Activated CD4-positive, alpha-beta memory T cell treated with anti-CD3 and anti-CD28 coated beads for 36 hours (primary cell): ENCODE measurements at regions of chr22 and their contacts with region 1.

Region 1: GRCh38 chr22:22959147-22959827 is 71.7 kb downstream of the IGLL5 start:
- DNase-seq: peak; percentile 81
- H3K4me3 Mint-ChIP-seq: no peak overlapping the region
- H3K27ac Mint-ChIP-seq: no peak overlapping the region
- H3K4me1 Mint-ChIP-seq: peaks cover 3% of the 10 kb centered on the region
- H3K27me3 Mint-ChIP-seq: peaks cover 21% of the 10 kb centered on the region

Region 2: GRCh38 chr22:22737590-22737989 is 221.7 kb before region 1 on chr22:
- CTCF ChIA-PET with region 1: no interaction called
- POLR2A ChIA-PET with region 1: no interaction called
- intact Hi-C with region 1: no loop called
- DNase-seq: no peak
- H3K4me3 Mint-ChIP-seq: no peak overlapping the region
- H3K27ac Mint-ChIP-seq: no peak overlapping the region
- H3K4me1 Mint-ChIP-seq: peaks cover 4% of the 10 kb centered on the region
- H3K27me3 Mint-ChIP-seq: peaks cover 24% of the 10 kb centered on the region

Region 3: GRCh38 chr22:22770280-22770871 is 188.9 kb before region 1 on chr22:
- CTCF ChIA-PET with region 1: interaction called, 10 read pairs
- POLR2A ChIA-PET with region 1: no interaction called
- intact Hi-C with region 1: no loop called
- DNase-seq: peak; percentile 65
- H3K4me3 Mint-ChIP-seq: no peak overlapping the region
- H3K27ac Mint-ChIP-seq: no peak overlapping the region
- H3K4me1 Mint-ChIP-seq: peaks cover 9% of the 10 kb centered on the region
- H3K27me3 Mint-ChIP-seq: peaks cover 5% of the 10 kb centered on the region

Region 4: GRCh38 chr22:22848364-22848866 is 110.9 kb before region 1 on chr22:
- CTCF ChIA-PET with region 1: interaction called, 100 read pairs
- POLR2A ChIA-PET with region 1: no interaction called
- intact Hi-C with region 1: loop called (anchors 1 kb)
- DNase-seq: peak; percentile 78
- H3K4me3 Mint-ChIP-seq: no peak overlapping the region
- H3K27ac Mint-ChIP-seq: no peak overlapping the region
- H3K4me1 Mint-ChIP-seq: peaks cover 28% of the 10 kb centered on the region
- H3K27me3 Mint-ChIP-seq: no peaks in the 10 kb centered on the region

Region 5: GRCh38 chr22:22903355-22903777 is 55.9 kb before region 1 on chr22:
- CTCF ChIA-PET with region 1: no interaction called
- POLR2A ChIA-PET with region 1: no interaction called
- intact Hi-C with region 1: no loop called
- DNase-seq: no peak
- H3K4me3 Mint-ChIP-seq: no peak overlapping the region
- H3K27ac Mint-ChIP-seq: no peak overlapping the region
- H3K4me1 Mint-ChIP-seq: no peaks in the 10 kb centered on the region
- H3K27me3 Mint-ChIP-seq: peaks cover 1% of the 10 kb centered on the region

Region 6: DNA sequence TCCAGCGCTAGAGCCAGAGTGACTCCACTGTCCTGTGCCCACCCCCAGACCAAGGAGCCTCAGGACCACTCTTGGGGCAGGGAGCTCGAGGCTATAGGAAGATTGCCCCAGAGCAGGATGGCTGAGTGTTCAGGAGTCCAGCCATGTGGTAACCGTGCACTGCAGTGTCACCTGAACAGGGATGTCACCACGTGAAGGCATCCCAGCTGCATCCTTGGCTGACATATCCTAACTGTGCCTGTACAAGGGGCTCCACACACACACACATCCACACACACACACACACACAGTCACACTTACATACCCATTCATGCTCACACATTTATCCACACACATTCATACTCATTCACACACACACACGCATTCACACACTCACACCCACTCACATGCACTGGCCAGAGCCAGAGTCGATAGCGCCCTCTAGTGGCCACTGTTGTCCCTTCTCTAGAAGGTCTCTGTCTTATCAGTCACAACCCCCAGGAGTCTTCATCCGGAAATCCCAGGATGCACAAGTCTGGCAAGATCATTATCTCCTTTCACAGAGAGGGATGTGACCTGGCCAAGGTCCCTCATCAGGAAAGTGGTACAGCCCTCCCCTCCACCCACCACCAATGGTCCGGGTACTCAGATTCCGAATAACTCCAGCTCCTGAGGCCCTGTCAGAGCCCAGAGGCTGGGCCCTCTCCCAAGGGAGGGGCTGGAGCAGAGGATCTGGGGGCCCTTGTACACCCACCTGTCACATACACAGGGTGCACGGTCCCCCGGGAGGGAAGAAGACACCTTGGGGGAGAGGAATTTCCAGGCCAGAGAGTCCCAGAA is 16.6 kb before region 1 on chr22:
- CTCF ChIA-PET with region 1: interaction called, 44 read pairs
- POLR2A ChIA-PET with region 1: no interaction called
- intact Hi-C with region 1: no loop called
- DNase-seq: peak; percentile 83
- H3K4me3 Mint-ChIP-seq: no peak overlapping the region
- H3K27ac Mint-ChIP-seq: no peak overlapping the region
- H3K4me1 Mint-ChIP-seq: peaks cover 5% of the 10 kb centered on the region
- H3K27me3 Mint-ChIP-seq: peaks cover 4% of the 10 kb centered on the region

Region 7: GRCh38 chr22:22982616-22983015 is 23.3 kb after region 1 on chr22:
- CTCF ChIA-PET with region 1: no interaction called
- POLR2A ChIA-PET with region 1: no interaction called
- intact Hi-C with region 1: no loop called
- DNase-seq: no peak
- H3K4me3 Mint-ChIP-seq: no peak overlapping the region
- H3K27ac Mint-ChIP-seq: no peak overlapping the region
- H3K4me1 Mint-ChIP-seq: peaks cover 4% of the 10 kb centered on the region
- H3K27me3 Mint-ChIP-seq: peaks cover 17% of the 10 kb centered on the region

Region 8: DNA sequence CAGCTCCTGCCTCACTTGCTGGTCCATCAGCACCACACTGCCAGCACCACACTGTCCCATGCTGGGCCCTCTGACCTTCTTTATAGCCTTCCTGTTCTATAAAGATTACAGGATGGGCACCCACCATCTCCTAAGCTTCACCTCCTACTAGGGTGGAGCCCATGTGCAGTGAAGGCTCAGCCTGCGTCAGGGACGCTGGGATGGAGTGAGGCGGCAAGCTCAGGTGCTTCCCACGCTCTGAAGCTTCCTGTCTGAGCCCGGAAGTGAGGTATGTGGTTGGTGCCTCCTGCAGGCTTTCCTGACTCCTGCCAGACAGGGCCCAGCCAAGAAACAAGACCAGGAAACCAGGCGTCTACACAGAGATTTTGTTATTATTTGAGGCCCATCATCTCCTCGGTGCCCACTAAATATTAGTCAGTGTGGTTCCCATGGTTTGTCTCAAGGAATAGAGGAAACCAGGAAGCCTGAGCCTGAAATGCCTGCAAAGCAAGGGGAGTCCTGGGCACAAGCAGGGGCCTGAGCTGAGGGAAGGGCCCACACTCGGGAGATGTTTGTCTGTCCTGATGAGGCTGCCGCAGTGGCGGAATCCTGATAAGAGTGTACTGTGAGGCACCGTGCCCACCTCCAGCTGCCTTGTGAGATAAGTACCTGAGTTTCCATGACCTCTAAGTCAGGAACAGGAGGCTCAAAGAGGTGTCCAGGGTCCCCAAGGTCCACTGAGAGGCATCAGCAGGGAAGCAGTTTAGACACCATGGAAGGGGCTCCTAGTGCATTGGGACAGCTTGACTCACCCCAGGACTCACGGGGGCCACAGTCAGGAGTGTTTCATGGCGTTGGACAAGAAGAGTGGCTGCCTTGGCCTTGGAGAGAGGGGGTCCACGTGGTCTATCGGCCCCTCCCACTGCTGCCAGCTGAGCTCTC is 160.5 kb after region 1 on chr22:
- CTCF ChIA-PET with region 1: interaction called, 105 read pairs
- POLR2A ChIA-PET with region 1: no interaction called
- intact Hi-C with region 1: loop called (anchors 2 kb)
- DNase-seq: peak; percentile 78
- H3K4me3 Mint-ChIP-seq: peak overlapping the region; percentile 52
- H3K27ac Mint-ChIP-seq: peak overlapping the region; percentile 82
- H3K4me1 Mint-ChIP-seq: peaks cover 17% of the 10 kb centered on the region
- H3K27me3 Mint-ChIP-seq: no peaks in the 10 kb centered on the region

Region 9: DNA sequence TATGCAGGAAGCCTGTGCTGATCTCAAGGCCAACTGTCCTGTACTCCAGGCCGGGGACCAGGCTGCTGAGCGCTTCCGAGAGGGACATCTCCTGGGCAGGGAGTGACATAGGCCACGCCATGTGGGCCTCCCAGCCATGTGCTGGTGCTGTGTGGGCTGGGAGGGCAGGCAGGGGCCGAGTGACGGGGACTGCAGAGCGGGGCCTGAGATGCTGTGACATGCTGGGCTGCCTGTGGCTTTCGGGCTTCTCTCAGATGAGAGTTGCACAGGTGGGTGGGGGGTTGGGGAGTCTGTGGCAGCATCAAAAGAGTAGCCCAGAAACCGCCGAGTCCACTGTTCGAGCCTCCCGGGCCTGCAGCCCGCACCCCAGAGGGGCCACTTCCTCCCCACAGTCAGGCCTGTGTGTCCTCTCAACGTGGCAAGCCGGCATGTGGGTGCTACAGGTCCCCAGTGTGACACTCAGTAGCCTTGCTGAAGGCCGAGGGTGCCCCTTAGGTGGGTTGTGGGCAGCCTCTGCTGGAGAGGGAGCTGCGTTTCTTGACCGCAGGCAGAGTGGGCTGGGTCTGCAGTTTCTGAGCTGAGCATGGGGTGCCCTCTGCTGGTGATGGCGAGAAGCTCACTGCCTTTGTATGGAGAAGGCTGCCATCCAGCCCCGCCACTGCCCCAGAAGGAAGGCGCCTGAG is 322.3 kb after region 1 on chr22:
- CTCF ChIA-PET with region 1: interaction called, 9 read pairs
- POLR2A ChIA-PET with region 1: no interaction called
- intact Hi-C with region 1: loop called (anchors 5 kb)
- DNase-seq: peak; percentile 87
- H3K4me3 Mint-ChIP-seq: no peak overlapping the region
- H3K27ac Mint-ChIP-seq: no peak overlapping the region
- H3K4me1 Mint-ChIP-seq: peaks cover 35% of the 10 kb centered on the region
- H3K27me3 Mint-ChIP-seq: no peaks in the 10 kb centered on the region